Naive thymus-derived CD8-positive, alpha-beta T cell (primary cell): ENCODE measurements at regions of chr20 and their contacts with region 1.

Region 1: DNA sequence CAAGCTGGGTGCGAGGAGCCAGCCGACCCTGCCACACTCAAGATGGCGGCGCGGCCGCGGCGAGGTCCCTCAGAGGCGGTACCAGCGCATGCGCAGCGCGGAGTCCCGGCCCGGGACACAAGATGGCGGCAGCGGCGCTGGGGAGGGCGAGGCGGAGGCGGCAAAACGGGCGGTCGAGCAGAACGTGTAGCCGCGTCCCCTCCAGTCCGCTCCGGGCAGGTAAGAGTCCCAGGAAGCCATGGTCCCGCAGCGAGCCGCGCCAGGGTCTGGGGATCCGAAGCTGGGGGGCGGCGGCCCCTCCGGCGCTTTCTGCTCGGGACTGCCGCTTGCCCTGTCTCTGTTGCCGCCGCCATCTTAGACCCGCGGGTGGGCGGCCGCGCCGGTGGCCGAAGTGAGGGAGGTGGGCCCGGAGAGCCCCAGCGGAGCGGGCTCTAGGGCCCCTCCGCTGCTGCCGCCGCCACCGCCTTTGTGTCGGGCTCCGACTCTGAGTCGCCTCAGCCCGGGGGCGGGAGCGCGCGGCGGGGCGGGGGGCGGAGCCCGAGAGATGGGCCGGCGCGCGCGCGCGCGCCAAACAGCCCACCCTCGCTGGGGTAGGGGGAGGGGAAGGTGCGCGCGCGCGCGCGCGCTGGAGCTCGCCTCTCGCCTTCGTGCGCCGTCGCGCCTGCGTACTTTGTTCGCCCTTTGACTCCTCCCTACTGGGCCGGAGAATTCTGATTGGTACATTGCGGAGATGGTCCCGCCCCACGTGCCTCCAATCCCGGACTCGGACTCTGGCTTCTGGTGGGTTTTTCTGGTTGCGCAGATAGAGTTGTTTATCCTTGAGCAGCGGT is at the start of gene PCIF1:
- DNase-seq: peak; percentile 97 to 100 (median 99)
- ATAC-seq: peak; percentile 80 to 86
- H3K4me3 Mint-ChIP-seq: peak within 1 kb of the TSS; percentile 93 to 100 (median 97)
- H3K27ac Mint-ChIP-seq: peak within 1 kb of the TSS; percentile 94 to 100 (median 99)
- H3K4me1 Mint-ChIP-seq: peaks cover 13 to 46% (median 27%) of the 10 kb centered on the region in 4 donors
- H3K27me3 Mint-ChIP-seq: no peaks in the 10 kb centered on the region
- polyA plus RNA-seq, gene PCIF1: 60.8 to 94.2 (median 78.7) TPM

Region 2: GRCh38 chr20:45518282-45518681 is 416.5 kb before region 1 on chr20:
- POLR2A ChIA-PET with region 1: no interaction called
- DNase-seq: no peak
- ATAC-seq: no peak
- H3K4me3 Mint-ChIP-seq: no peak overlapping the region
- H3K27ac Mint-ChIP-seq: no peak overlapping the region
- H3K4me1 Mint-ChIP-seq: no peaks in the 10 kb centered on the region
- H3K27me3 Mint-ChIP-seq: peaks cover 13 to 40% (median 26%) of the 10 kb centered on the region in 5 donors

Region 3: DNA sequence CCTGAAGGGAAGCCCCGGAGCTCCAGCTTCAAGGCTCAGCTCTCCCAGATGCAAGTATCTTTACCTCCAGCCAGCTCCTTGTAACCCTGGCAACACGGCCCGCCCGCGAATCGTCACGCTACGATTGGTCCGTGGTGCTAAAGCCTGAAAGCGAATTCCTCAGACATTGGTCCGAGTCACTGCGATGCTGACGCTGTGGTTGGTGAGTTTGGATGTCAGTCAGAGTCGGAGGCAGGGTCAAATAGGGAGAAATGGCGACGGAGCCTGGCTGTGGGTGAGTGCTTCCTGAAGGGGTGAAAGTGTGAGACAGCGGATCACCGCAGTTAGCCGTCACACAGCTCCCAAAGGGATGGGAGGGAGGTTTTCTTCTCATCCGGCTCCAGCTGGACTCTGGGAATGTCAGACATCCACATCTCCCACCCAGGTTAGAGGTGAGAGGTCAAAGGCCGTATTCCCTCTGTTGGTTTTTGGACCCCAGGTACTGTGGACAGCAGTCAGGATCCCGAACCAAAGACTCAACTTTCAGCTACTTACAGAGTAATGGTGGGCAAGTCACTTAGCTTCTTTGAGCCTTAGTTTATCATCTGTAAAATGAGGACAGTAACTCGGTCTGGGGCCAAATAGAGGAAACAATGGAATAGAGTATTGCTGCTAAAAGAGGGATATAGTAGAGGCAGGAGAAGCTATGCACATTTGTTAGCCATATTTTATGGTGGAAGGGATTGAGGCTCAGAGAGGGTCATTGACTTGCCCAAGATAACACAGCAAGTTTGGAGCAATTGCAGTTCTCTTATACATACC is 53.6 kb before region 1 on chr20 and contains the start of gene ZSWIM1:
- POLR2A ChIA-PET with region 1: interaction called, 56 read pairs
- DNase-seq: peak; percentile 91 to 99 (median 98)
- ATAC-seq: peak; percentile 99 to 100
- H3K4me3 Mint-ChIP-seq: peak within 1 kb of the TSS; percentile 87 to 96 (median 91)
- H3K27ac Mint-ChIP-seq: peak within 1 kb of the TSS; percentile 86 to 98 (median 96)
- H3K4me1 Mint-ChIP-seq: peaks cover 20 to 45% (median 39%) of the 10 kb centered on the region in 4 donors
- H3K27me3 Mint-ChIP-seq: no peaks in the 10 kb centered on the region
- polyA plus RNA-seq, gene ZSWIM1: 0.96 to 9.8 (median 1.7) TPM

Region 4: DNA sequence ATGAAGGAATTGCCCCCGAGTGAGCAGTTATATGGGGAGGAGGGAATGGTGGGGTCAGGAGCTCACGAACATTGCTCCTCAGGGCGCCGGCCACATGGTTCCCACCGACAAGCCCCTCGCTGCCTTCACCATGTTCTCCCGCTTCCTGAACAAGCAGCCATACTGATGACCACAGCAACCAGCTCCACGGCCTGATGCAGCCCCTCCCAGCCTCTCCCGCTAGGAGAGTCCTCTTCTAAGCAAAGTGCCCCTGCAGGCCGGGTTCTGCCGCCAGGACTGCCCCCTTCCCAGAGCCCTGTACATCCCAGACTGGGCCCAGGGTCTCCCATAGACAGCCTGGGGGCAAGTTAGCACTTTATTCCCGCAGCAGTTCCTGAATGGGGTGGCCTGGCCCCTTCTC is 36.5 kb before region 1 on chr20:
- POLR2A ChIA-PET with region 1: interaction called, 120 read pairs
- DNase-seq: no peak
- ATAC-seq: no peak
- H3K4me3 Mint-ChIP-seq: no peak overlapping the region
- H3K27ac Mint-ChIP-seq: peak overlapping the region in 1 of 10 donors; percentile 78
- H3K4me1 Mint-ChIP-seq: peaks cover 0 to 8% (median 6%) of the 10 kb centered on the region in 4 donors
- H3K27me3 Mint-ChIP-seq: no peaks in the 10 kb centered on the region

Region 5: GRCh38 chr20:45910670-45911485 is 23.9 kb before region 1 on chr20:
- POLR2A ChIA-PET with region 1: interaction called, 31 read pairs
- DNase-seq: peak; percentile 75 to 92 (median 86)
- ATAC-seq: peak; percentile 86 to 87
- H3K4me3 Mint-ChIP-seq: peak overlapping the region; percentile 74 to 92 (median 86)
- H3K27ac Mint-ChIP-seq: peak overlapping the region in 9 of 10 donors; percentile 5 to 85 (median 66)
- H3K4me1 Mint-ChIP-seq: peaks cover 6 to 25% (median 15%) of the 10 kb centered on the region in 4 donors
- H3K27me3 Mint-ChIP-seq: peaks cover 5 to 26% (median 9%) of the 10 kb centered on the region in 5 donors

Region 6: DNA sequence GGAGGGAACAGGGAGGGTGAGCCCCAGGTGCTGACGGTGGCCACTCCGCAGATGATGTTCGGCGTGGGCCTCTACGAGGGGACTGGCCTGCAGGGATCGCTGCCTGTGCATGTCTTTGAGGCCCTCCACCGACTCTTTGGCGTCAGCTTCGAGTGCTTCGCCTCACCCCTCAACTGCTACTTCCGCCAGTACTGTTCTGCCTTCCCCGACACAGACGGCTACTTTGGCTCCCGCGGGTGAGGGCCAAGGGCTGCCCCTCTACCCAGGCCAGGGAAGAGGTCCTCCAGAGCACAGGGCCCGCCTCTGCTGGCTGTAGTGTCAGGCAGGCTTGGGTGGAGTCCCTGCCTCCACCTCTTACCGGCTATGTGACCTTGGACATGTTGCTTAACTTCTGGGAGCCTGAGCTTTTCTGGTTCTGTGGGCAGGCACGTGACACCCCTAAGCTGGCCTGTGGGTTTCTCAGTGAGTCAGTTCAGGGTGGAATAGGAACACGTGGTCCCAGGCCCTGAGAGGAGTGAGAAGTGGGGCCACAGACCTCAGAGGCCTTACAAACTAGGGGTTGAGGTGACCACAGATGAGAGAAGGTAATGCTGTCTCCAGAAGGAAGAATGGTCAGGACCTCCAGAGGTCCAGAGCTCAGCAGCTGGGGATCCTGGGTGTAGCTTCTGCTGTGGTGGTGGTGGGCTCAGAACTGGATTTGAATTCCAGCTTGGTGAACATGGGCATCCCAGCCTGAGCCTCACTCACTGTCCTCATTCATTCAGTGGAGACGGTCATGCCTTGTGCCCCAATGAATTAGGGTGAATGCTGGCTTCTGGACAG is 11.6 kb after region 1 on chr20:
- POLR2A ChIA-PET with region 1: interaction called, 138 read pairs
- DNase-seq: peak in 2 of 10 donors; percentile 31 to 45
- ATAC-seq: no peak
- H3K4me3 Mint-ChIP-seq: no peak overlapping the region
- H3K27ac Mint-ChIP-seq: peak overlapping the region in 6 of 10 donors; percentile 34 to 84 (median 58)
- H3K4me1 Mint-ChIP-seq: peaks cover 0 to 28% (median 2%) of the 10 kb centered on the region in 4 donors
- H3K27me3 Mint-ChIP-seq: no peaks in the 10 kb centered on the region

Region 7: GRCh38 chr20:45993197-45993951 is 58.6 kb after region 1 on chr20:
- POLR2A ChIA-PET with region 1: no interaction called
- DNase-seq: no peak
- ATAC-seq: no peak
- H3K4me3 Mint-ChIP-seq: no peak overlapping the region
- H3K27ac Mint-ChIP-seq: peak overlapping the region in 1 of 10 donors; percentile 18
- H3K4me1 Mint-ChIP-seq: peaks cover 15 to 33% (median 29%) of the 10 kb centered on the region in 4 donors
- H3K27me3 Mint-ChIP-seq: peaks cover 2 to 25% (median 14%) of the 10 kb centered on the region in 5 donors

Region 8: DNA sequence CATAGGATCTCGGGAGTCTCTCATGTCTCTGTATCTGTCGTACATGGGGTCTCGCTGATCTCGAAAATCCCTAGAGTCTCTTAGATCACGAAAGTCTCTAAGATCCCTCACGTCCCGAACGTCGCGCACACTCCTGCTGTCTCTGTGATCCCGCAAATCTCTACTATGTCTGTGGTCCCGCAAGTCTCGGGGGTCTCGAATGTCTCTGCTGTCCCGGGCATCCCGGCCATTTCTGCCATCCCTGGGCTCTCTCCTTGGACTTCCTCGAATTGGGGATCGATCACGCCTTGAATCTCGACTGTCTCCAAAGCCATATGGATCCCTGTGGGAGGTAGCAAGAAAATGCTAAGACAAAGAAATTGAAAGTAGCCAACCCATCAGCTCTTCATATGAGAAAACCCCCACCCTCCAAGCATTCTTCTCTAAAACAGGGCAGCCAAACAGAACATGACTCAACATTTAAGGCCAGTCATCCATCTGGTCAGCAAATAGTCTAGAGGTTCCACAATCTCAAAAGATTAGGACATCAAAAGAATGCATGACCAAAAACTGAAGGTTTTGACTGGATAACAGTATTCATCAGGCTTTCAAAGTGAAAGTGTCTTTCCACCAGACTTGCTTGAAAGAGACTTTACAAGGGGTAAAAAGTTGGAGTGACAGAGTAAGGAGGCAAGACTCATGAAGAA is 135.6 kb after region 1 on chr20:
- POLR2A ChIA-PET with region 1: no interaction called
- DNase-seq: no peak
- ATAC-seq: no peak
- H3K4me3 Mint-ChIP-seq: no peak overlapping the region
- H3K27ac Mint-ChIP-seq: no peak overlapping the region
- H3K4me1 Mint-ChIP-seq: peaks cover 5 to 12% (median 8%) of the 10 kb centered on the region in 4 donors
- H3K27me3 Mint-ChIP-seq: peaks cover 0 to 2% (median 0%) of the 10 kb centered on the region in 5 donors

Region 9: DNA sequence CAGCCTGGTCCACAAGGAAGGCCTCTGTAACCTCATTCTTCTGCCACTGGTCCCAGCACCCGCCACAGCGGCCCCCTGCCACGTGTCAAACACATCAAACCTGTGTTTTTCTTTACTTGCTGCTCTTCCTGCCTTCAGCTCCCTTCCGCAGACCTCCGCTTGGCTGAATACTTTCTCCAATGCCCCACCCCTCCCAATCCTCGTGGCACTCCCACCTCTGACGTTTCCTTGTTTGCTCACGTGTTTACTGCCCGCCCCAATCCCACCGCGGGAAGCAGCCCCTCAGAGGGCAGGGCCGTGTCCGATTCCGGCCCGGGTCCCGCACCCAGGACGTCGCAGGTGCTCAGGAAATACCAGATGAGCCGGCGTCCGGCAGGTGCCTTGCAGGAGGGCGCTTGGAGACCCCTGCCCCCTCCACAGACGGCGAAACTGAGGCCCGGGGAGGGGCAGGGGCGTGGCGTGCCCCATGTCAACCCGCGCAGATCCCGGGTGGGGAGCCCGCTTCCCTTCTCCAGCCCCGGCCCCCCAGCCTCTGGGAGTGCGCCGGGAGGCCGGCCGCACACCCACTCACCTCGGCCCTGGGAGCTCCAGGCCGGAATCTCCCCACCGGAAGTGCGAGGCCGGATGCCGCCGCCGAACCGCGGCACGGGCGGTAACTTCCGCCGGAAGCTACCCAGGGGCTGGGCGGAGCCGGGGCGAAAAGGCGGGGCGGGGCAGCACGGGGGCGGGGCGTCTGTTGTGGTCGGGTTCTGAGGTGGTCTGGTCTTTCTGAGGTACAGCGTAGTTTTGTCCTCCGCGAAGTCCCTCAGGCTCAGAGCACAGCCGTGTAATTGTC is 429.2 kb after region 1 on chr20:
- POLR2A ChIA-PET with region 1: interaction called, 18 read pairs
- DNase-seq: peak; percentile 77 to 91 (median 87)
- ATAC-seq: peak; percentile 73 to 76
- H3K4me3 Mint-ChIP-seq: peak overlapping the region; percentile 81 to 97 (median 93)
- H3K27ac Mint-ChIP-seq: peak overlapping the region; percentile 91 to 99 (median 96)
- H3K4me1 Mint-ChIP-seq: peaks cover 46 to 86% (median 78%) of the 10 kb centered on the region in 4 donors
- H3K27me3 Mint-ChIP-seq: no peaks in the 10 kb centered on the region